Posterior cingulate gyrus (tissue), 11 donors: ENCODE measurements at regions of chr3 and their contacts with region 1.

Region 1: DNA sequence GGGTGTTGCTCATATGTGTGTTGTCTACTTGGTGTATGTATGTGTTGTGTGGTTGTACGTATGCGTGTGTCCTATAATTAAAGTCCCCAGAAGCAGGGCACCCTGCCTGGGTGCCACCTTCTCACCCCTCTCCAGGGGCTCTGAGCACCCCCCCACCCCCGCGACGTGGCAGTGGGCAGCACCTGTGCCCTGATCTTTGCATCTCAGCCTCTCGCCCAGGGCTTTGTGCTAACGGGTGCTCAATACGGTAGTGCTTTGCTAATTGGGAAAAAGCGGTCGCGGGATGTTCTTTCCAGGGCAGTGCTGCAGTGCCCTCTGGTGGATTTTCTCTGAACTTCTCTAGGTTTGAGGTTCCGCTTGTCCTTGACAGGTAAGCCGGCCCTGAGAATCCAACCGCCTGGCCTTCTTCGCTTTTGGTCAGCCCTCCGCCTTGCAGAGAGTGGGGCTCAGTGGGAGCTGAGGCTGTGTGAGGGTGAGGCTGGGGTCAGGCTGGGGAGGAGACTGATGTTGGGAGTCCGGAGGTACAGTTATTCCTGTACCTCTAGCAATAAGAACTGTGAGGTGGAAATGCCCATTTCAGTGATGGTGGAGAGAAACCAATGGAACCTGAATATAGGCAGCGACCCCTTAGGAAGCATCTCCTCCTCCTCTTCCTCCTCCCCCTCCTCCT is 17.6 kb upstream of the EPHB3 start:
- DNase-seq: peak; percentile 53 to 95 (median 75)

Region 2: DNA sequence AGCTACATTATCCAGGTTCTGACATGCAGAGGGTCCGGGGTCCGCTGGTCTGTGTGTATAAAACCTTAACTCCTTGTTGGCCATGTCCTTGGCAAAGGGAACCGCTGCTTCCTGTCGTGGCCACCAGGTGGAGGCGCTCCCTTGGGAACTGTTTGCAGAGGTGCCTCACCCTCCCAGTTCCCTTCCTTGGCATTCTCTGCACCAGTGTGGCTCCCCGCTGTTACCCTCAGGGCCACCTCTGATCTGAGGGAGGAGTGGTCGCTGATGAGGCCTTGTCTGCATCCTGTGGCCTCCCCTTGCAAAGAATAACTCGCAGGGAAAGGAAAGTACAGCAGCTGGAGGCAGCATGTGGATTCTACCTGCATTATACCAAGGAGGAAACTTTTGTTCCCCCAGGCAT is 74.6 kb before region 1 on chr3:
- intact Hi-C with region 1: loop called (anchors 10 kb)
- DNase-seq: peak in 9 of 10 donors; percentile 27 to 90 (median 47)

Region 3: GRCh38 chr3:184505076-184505878 is 38.7 kb before region 1 on chr3:
- intact Hi-C with region 1: no loop called
- DNase-seq: no peak